Activated B cell treated with CpG ODN at 0.5 μM for 24 hours (primary cell): ENCODE measurements at regions of chr14 and their contacts with region 1.

Region 1: DNA sequence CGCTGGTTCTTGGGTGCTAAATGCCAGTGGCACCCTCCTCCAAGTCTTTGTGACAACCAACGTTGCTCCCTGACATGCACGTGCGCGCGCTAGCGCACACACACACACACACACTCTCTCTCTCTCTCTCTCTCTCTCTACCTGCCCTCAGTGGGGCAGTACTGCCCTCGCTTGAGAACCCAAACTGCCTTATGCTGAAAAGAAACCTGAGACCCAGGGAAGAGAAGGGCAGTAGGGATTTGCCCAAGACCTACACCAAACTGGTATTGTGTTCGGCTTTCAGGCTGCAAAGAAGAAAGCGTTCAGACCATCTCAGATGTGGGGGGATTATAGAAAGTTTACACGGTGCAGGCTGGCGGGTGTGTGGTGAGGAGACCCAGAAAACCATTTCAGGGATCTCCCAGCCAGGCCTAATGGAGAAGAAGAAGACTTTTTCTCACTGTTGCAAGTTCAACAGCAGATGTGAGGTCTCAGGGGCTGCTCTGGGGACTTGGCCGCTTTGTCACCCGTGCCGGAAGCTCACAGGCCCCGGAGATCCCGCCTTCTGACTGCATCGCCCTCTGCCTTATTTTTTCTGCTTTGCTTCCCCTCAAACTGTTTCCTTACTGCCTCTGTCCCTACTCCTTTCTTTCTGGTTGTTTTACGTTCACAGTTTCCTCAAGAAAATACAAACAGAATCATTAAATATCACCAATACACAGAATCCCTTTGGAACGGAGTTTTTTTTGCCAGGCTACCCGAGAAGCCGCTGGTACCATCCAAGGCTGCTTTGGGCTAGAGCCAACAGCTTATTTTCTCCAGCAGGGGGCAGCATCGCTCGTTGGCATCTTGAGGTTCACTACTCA is 82.4 kb downstream of the PPM1A start:
- DNase-seq: peak; percentile 53
- ATAC-seq: peak; percentile 68
- H3K4me3 Mint-ChIP-seq: peak overlapping the region; percentile 96
- H3K27ac Mint-ChIP-seq: peak overlapping the region; percentile 92
- H3K4me1 Mint-ChIP-seq: peaks cover 26% of the 10 kb centered on the region
- H3K27me3 Mint-ChIP-seq: peaks cover 19% of the 10 kb centered on the region
- CTCF ChIP-seq: peak; percentile 70

Region 2: GRCh38 chr14:59464486-59465315 is 866.7 kb before region 1 on chr14:
- CTCF ChIA-PET with region 1: no interaction called
- POLR2A ChIA-PET with region 1: no interaction called
- intact Hi-C with region 1: no loop called
- DNase-seq: peak; percentile 64
- ATAC-seq: peak; percentile 68
- H3K4me3 Mint-ChIP-seq: peak overlapping the region; percentile 86
- H3K27ac Mint-ChIP-seq: peak overlapping the region; percentile 48
- H3K4me1 Mint-ChIP-seq: peaks cover 14% of the 10 kb centered on the region
- H3K27me3 Mint-ChIP-seq: no peaks in the 10 kb centered on the region
- CTCF ChIP-seq: no peak

Region 3: DNA sequence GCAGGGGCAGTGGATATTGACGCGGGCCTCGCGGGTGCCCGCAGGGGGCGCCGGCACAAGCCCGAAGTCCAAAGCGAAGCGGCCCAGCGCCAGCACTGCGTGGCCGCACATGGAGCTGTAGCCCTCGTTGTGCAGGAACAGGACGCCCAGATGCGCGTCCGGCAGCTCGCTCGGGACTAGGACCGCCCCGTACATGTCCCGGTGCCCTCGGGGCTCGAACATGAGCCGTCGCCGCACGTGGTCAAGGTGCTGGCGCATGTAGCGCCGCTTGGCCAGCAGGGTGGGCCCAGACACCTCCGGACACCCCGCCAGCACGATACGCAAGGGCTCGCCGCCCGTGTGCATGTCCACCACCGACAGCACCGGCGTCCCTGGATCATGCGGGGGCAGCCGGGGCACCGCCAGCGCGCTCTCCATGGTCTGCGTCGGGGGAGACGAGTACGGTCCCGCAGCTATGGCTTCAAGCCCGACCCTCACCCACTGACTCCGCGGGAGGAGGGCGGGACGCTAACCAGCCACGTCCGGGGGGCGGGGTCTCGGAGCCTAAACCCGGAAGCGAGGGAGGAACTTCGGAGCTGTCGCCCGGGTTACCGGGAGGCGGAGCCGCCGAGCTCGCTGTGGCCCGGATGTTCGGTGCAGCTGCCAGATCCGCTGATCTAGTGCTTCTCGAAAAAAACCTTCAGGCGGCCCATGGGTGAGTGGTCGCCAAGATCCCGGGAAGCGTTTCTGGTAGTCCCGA is 847.4 kb before region 1 on chr14 and contains the starts of genes JKAMP and L3HYPDH:
- CTCF ChIA-PET with region 1: no interaction called
- POLR2A ChIA-PET with region 1: interaction called, 3 read pairs
- intact Hi-C with region 1: loop called (anchors 5 kb)
- DNase-seq: peak; percentile 96
- ATAC-seq: peak; percentile 92
- H3K4me3 Mint-ChIP-seq: peak within 1 kb of the TSS; percentile 98
- H3K27ac Mint-ChIP-seq: peak within 1 kb of the TSS; percentile 96
- H3K4me1 Mint-ChIP-seq: peaks cover 52% of the 10 kb centered on the region
- H3K27me3 Mint-ChIP-seq: no peaks in the 10 kb centered on the region
- CTCF ChIP-seq: no peak
- total RNA-seq, gene JKAMP: 18.1 and 28.8 TPM in 2 replicates
- total RNA-seq, gene L3HYPDH: 22.1 and 30.2 TPM in 2 replicates

Region 4: GRCh38 chr14:60091550-60092530 is 239.6 kb before region 1 on chr14 and contains the start of gene PCNX4:
- CTCF ChIA-PET with region 1: no interaction called
- POLR2A ChIA-PET with region 1: no interaction called
- intact Hi-C with region 1: loop called (anchors 1 kb)
- DNase-seq: peak; percentile 88
- ATAC-seq: peak; percentile 91
- H3K4me3 Mint-ChIP-seq: peak within 1 kb of the TSS; percentile 92
- H3K27ac Mint-ChIP-seq: peak within 1 kb of the TSS; percentile 96
- H3K4me1 Mint-ChIP-seq: peaks cover 37% of the 10 kb centered on the region
- H3K27me3 Mint-ChIP-seq: no peaks in the 10 kb centered on the region
- CTCF ChIP-seq: no peak
- total RNA-seq, gene PCNX4: 31.7 and 41.4 TPM in 2 replicates

Region 5: GRCh38 chr14:60195179-60195810 is 136.1 kb before region 1 on chr14:
- CTCF ChIA-PET with region 1: no interaction called
- POLR2A ChIA-PET with region 1: no interaction called
- intact Hi-C with region 1: loop called (anchors 5 kb)
- DNase-seq: no peak
- ATAC-seq: no peak
- H3K4me3 Mint-ChIP-seq: no peak overlapping the region
- H3K27ac Mint-ChIP-seq: no peak overlapping the region
- H3K4me1 Mint-ChIP-seq: no peaks in the 10 kb centered on the region
- H3K27me3 Mint-ChIP-seq: peaks cover 1% of the 10 kb centered on the region
- CTCF ChIP-seq: no peak

Region 6: GRCh38 chr14:60288279-60288678 is 43.1 kb before region 1 on chr14:
- CTCF ChIA-PET with region 1: no interaction called
- POLR2A ChIA-PET with region 1: no interaction called
- intact Hi-C with region 1: no loop called
- DNase-seq: no peak
- ATAC-seq: no peak
- H3K4me3 Mint-ChIP-seq: no peak overlapping the region
- H3K27ac Mint-ChIP-seq: no peak overlapping the region
- H3K4me1 Mint-ChIP-seq: no peaks in the 10 kb centered on the region
- H3K27me3 Mint-ChIP-seq: no peaks in the 10 kb centered on the region
- CTCF ChIP-seq: no peak

Region 7: GRCh38 chr14:60561845-60562746 is 230.7 kb after region 1 on chr14:
- CTCF ChIA-PET with region 1: no interaction called
- POLR2A ChIA-PET with region 1: no interaction called
- intact Hi-C with region 1: loop called (anchors 1 kb)
- DNase-seq: no peak
- ATAC-seq: no peak
- H3K4me3 Mint-ChIP-seq: no peak overlapping the region
- H3K27ac Mint-ChIP-seq: no peak overlapping the region
- H3K4me1 Mint-ChIP-seq: peaks cover 4% of the 10 kb centered on the region
- H3K27me3 Mint-ChIP-seq: peaks cover 2% of the 10 kb centered on the region
- CTCF ChIP-seq: no peak

Region 8: GRCh38 chr14:60724137-60724619 is 392.8 kb after region 1 on chr14 and contains the start of gene SIX4:
- CTCF ChIA-PET with region 1: no interaction called
- POLR2A ChIA-PET with region 1: no interaction called
- intact Hi-C with region 1: loop called (anchors 5 kb)
- DNase-seq: no peak
- ATAC-seq: peak; percentile 26
- H3K4me3 Mint-ChIP-seq: peak within 1 kb of the TSS; percentile 87
- H3K27ac Mint-ChIP-seq: no peak within 1 kb of the TSS
- H3K4me1 Mint-ChIP-seq: peaks cover 22% of the 10 kb centered on the region
- H3K27me3 Mint-ChIP-seq: peaks cover 73% of the 10 kb centered on the region
- CTCF ChIP-seq: no peak
- total RNA-seq, gene SIX4: not detected in 2 replicates

Region 9: DNA sequence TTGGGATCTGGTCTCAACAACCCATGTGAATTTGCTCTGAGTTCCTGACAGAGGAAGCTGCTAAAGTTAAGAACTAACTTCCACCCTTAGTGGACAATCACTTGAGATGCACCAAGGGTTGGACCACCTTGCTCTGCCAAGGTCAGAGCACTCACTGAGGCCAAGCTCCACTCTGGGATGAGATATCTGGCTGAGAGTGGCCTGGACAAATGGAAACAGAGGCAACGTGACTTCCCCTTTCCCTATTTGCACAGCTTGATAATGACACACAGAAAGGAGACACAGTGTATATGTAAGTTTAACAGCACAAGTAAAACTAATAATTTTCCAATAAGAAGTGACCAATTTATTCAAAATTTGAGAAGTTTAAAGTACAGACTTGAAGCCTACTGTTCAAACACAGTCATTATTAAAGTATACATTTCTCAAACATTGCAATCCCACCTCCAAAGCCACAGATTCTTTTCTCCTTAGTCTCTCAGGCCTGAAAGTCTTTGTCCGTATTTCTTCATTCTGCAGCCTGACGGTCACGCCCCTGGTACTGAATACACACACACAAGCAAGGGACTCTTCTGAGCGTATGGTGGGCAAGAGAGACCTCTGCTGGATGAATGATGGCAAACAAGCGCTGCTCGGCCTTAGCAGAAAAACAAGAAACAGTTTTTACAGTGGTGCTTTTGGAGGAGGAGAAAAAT is 921.1 kb after region 1 on chr14:
- CTCF ChIA-PET with region 1: no interaction called
- POLR2A ChIA-PET with region 1: no interaction called
- intact Hi-C with region 1: loop called (anchors 5 kb)
- DNase-seq: no peak
- ATAC-seq: peak; percentile 85
- H3K4me3 Mint-ChIP-seq: no peak overlapping the region
- H3K27ac Mint-ChIP-seq: no peak overlapping the region
- H3K4me1 Mint-ChIP-seq: peaks cover 9% of the 10 kb centered on the region
- H3K27me3 Mint-ChIP-seq: peaks cover 5% of the 10 kb centered on the region
- CTCF ChIP-seq: peak; percentile 43